ENCODE measurements at regions of chr6 and their contacts with region 1.

Region 1: DNA sequence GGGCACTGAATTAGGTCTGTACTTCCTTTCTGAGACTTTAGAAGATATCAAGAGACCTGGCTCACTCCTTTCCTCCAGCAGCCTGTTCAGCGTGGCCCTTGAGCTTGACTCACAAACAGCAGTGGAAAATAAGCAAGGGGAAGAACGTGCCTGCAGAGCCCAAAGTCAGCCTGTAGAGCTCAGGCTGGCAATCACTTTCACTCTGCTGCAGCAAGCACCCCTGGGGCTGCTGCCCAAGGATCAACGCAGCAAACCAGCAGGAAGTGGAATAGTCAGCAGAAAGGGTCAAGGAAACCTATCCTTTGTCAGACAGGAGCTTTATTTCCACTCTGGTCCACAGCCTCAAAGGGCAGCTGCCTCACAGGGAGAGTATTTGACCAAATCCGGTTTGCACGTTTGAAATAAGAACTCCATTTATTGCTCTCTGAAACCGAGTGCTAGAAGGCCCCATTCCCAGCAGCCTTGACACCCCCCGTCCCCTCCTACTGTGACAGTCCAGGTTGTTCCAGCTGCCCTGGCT is 77.4 kb downstream of the PRDM1 start:
- DNase-seq: peak; percentile 69
- ATAC-seq: peak; percentile 52
- H3K4me3 ChIP-seq: peak overlapping the region; percentile 13; the same call in 1 of the 2 replicates
- H3K27ac ChIP-seq: peak overlapping the region; percentile 97
- H3K4me1 ChIP-seq: peaks cover 64% of the 10 kb centered on the region
- H3K27me3 ChIP-seq: no peaks in the 10 kb centered on the region
- CTCF ChIP-seq: peak in 2 of 3 experiments; percentile 22 to 23; a peak in 2 of 6 replicates
- EP300 ChIP-seq: no peak
- POLR2A ChIP-seq: no peak
- RAD21 ChIP-seq: no peak

Region 2: GRCh38 chr6:105492706-105493673 is 670.5 kb before region 1 on chr6:
- CTCF ChIA-PET with region 1: no interaction called
- POLR2A ChIA-PET with region 1: no interaction called
- RAD21 ChIA-PET with region 1: interaction called, 4 read pairs
- SMC1A ChIA-PET with region 1: interaction called, 3 read pairs
- in situ Hi-C with region 1: no loop called
- intact Hi-C with region 1: loop called (anchors 5 kb)
- DNase-seq: no peak
- ATAC-seq: peak; percentile 83
- H3K4me3 ChIP-seq: no peak overlapping the region
- H3K27ac ChIP-seq: peak overlapping the region; percentile 27
- H3K4me1 ChIP-seq: peaks cover 47% of the 10 kb centered on the region
- H3K27me3 ChIP-seq: no peaks in the 10 kb centered on the region
- CTCF ChIP-seq: no peak
- EP300 ChIP-seq: no peak; a peak in 1 of 4 replicates
- POLR2A ChIP-seq: no peak
- RAD21 ChIP-seq: no peak

Region 3: DNA sequence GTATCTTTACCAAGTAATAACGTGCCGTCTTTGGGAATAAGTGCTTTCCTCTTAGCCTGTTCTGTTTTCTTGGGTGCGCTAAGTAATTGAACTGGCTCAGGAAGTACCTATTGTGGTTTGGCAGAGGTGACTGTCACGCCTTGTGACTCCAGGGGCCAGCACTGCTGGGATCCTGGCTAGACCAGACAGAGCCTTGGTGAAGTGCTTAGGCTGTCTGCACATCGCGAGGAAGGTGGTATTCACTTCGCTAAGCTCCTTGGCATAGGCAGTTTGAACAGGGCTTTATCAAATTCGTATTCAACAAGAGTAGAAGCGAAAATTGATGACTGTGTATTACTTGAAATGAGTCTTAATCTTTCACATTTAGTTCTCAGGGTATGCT is 59.8 kb before region 1 on chr6:
- CTCF ChIA-PET with region 1: interaction called, 6 read pairs
- POLR2A ChIA-PET with region 1: interaction called, 5 read pairs
- RAD21 ChIA-PET with region 1: interaction called, 6 read pairs
- SMC1A ChIA-PET with region 1: interaction called, 19 read pairs
- in situ Hi-C with region 1: loop called (anchors 10 kb)
- intact Hi-C with region 1: loop called (anchors 1 kb)
- DNase-seq: no peak
- ATAC-seq: peak; percentile 56
- H3K4me3 ChIP-seq: 0 out of 2 replicates have a peak overlapping the region, but pooled peaks have one; percentile 6
- H3K27ac ChIP-seq: 0 out of 2 replicates have a peak overlapping the region, but pooled peaks have one; percentile 15
- H3K4me1 ChIP-seq: peaks cover 46% of the 10 kb centered on the region
- H3K27me3 ChIP-seq: no peaks in the 10 kb centered on the region; a peak in 1 of 4 replicates
- CTCF ChIP-seq: no peak
- EP300 ChIP-seq: no peak
- POLR2A ChIP-seq: no peak
- RAD21 ChIP-seq: no peak

Region 4: GRCh38 chr6:106125925-106126435 is 37.5 kb before region 1 on chr6:
- CTCF ChIA-PET with region 1: no interaction called
- POLR2A ChIA-PET with region 1: no interaction called
- RAD21 ChIA-PET with region 1: interaction called, 10 read pairs
- SMC1A ChIA-PET with region 1: interaction called, 6 read pairs
- in situ Hi-C with region 1: no loop called
- intact Hi-C with region 1: loop called (anchors 1 kb)
- DNase-seq: peak; percentile 62
- ATAC-seq: peak; percentile 75
- H3K4me3 ChIP-seq: peak overlapping the region; percentile 38; the same call in 1 of the 2 replicates
- H3K27ac ChIP-seq: peak overlapping the region; percentile 55
- H3K4me1 ChIP-seq: peaks cover 46% of the 10 kb centered on the region
- H3K27me3 ChIP-seq: peaks cover 0 to 2% of the 10 kb centered on the region in 2 experiments; a peak in 1 of 4 replicates
- CTCF ChIP-seq: no peak
- EP300 ChIP-seq: no peak
- POLR2A ChIP-seq: no peak
- RAD21 ChIP-seq: no peak

Region 5: GRCh38 chr6:106181664-106182418 is 18.3 kb after region 1 on chr6:
- CTCF ChIA-PET with region 1: interaction called, 85 read pairs
- POLR2A ChIA-PET with region 1: interaction called, 9 read pairs
- RAD21 ChIA-PET with region 1: interaction called, 88 read pairs
- SMC1A ChIA-PET with region 1: interaction called, 148 read pairs
- in situ Hi-C with region 1: no loop called
- intact Hi-C with region 1: loop called (anchors 1 kb)
- DNase-seq: peak; percentile 40
- ATAC-seq: peak; percentile 57
- H3K4me3 ChIP-seq: no peak overlapping the region
- H3K27ac ChIP-seq: peak overlapping the region; percentile 74
- H3K4me1 ChIP-seq: peaks cover 45% of the 10 kb centered on the region
- H3K27me3 ChIP-seq: no peaks in the 10 kb centered on the region
- CTCF ChIP-seq: no peak
- EP300 ChIP-seq: no peak
- POLR2A ChIP-seq: no peak
- RAD21 ChIP-seq: no peak